HepG2 (cell line): ENCODE measurements at regions of chr13 and their contacts with region 1.

Region 1: DNA sequence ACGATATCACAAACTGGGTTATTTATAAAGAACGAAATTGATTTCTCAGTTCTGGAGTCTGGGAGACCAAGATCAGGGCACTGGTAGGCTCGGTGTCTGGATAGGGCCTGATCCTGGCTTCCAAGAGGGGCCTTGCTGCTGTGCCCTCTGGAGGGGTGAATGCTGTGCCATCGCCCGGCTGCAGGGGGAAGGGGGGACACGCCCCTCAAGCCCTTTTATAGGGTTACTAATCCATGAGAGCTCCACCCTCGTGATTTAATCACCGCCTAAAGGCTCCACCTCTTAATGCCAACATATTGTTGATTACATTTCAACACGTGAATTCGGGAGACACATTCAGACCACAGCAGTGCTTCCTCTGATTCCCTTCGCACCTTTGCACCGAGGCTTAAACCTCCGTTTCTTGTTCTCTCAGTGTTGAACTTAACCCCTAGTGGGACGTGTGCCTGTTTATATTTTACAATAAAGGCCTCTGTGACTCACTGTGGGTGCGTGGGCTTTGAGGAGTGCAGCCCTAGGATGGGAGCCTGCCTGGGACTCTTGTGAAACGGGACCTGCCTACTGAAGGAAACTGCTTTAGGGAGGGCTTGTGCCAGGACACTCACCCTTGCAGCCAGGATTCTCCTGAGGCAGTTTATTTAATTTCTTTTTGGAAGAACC is 52.4 kb upstream of the SPATA13 start:
- DNase-seq: no peak
- ATAC-seq: no peak
- H3K4me3 ChIP-seq: no peak overlapping the region
- H3K27ac ChIP-seq: no peak overlapping the region
- H3K4me1 ChIP-seq: peaks cover 30% of the 10 kb centered on the region
- H3K27me3 ChIP-seq: peaks cover 0 to 16% of the 10 kb centered on the region in 2 experiments; a peak in 3 of 5 replicates
- CTCF ChIP-seq: no peak
- EP300 ChIP-seq: no peak
- POLR2A ChIP-seq: no peak
- RAD21 ChIP-seq: no peak

Region 2: DNA sequence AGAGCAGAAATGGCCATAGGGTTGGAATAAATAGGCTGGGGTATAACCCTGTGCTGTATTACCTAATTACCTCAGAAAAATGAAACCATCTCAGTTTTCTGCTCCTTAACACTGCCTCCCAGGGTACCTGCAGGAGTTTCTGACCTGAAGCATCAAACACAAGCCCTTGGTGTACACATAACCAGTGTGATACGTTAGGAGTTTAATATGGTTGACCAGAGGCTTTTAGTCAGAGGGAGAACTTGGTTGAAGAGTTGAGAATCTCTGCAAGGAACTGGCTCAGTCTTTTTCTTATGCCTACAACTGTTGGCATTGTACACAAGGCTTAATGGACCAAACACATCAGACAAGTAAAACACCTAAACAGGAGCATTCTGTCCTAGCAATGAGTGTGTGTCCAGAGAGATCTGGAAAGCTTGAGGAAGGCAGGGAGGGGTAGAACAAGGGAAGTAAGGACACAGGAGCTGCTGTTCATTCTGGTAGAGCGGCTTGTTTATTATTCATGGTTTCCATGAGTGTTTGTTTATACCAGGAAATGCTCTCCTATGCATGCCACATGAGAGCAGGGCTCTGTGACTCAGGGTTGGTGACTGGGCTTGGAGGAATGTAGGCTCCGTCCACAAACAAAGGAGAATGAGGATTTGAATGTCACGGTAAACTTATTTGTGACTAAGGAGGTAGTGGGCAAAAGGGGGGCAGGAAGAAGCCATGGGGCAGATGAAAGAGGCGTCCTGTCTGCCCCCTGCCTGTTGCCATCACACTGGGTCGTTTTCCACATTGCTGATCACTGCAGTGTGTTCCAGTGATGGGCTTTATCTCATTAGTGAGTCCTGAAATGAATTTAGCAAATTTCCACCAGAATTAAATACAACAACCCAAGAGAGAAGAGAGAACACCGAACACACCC is 40.6 kb after region 1 on chr13:
- CTCF ChIA-PET with region 1: no interaction called
- POLR2A ChIA-PET with region 1: no interaction called
- in situ Hi-C with region 1: no loop called
- intact Hi-C with region 1: loop called (anchors 5 kb)
- DNase-seq: peak; percentile 90
- ATAC-seq: peak; percentile 85
- H3K4me3 ChIP-seq: peak overlapping the region in 2 of 3 experiments; percentile 44 to 50; a peak in 3 of 6 replicates
- H3K27ac ChIP-seq: peak overlapping the region; percentile 42
- H3K4me1 ChIP-seq: peaks cover 64% of the 10 kb centered on the region
- H3K27me3 ChIP-seq: peaks cover 0 to 5% of the 10 kb centered on the region in 2 experiments; a peak in 2 of 5 replicates
- CTCF ChIP-seq: peak; percentile 22; the same call in 1 of the 2 replicates
- EP300 ChIP-seq: peak in 1 of 2 experiments; percentile 73; a peak in 1 of 4 replicates
- POLR2A ChIP-seq: no peak
- RAD21 ChIP-seq: no peak